ENCODE measurements at regions of chr10 and their contacts with region 1.

Region 1: DNA sequence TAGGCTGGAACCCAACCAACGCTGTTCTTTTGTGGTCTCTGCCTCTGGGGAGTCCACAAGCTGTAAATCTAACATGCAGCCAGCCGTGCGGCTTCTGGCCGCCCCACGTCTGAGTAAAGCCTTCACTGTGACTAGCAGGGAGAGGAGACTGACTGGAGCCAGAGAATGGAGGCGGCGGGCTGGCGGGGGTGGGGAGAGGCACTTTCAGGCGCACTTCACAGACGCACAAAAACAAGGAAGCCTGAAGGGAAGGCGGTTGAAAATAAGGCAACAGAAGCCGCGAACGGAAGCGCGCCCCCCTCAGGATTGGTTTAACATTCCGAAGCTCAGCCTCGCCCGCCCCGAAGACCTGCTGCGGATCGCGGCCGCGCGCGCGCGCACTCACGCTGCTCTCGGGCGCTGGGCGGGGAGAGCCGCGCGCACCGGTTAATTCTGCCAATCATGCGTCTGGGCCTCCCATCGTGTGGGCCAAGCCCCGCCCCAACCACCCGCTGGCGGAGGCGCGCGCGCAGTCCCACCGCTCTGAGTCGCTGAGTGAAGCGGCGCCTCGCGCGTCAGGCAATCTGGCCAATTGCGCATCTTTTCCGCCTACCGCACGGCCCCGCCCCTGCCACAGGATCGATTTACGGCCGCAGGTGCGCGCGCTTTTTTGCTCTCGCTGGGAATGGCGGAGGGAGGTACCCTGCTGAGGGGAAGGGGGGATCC is at the start of gene SFR1:
- DNase-seq: peak; percentile 97
- ATAC-seq: peak; percentile 89
- H3K4me3 Mint-ChIP-seq: peak within 1 kb of the TSS; percentile 92
- H3K27ac Mint-ChIP-seq: peak within 1 kb of the TSS; percentile 99
- H3K4me1 Mint-ChIP-seq: peaks cover 25% of the 10 kb centered on the region
- H3K27me3 Mint-ChIP-seq: no peaks in the 10 kb centered on the region
- CTCF ChIP-seq: no peak
- total RNA-seq, gene SFR1: 12.3 TPM in 2 replicates

Region 2: DNA sequence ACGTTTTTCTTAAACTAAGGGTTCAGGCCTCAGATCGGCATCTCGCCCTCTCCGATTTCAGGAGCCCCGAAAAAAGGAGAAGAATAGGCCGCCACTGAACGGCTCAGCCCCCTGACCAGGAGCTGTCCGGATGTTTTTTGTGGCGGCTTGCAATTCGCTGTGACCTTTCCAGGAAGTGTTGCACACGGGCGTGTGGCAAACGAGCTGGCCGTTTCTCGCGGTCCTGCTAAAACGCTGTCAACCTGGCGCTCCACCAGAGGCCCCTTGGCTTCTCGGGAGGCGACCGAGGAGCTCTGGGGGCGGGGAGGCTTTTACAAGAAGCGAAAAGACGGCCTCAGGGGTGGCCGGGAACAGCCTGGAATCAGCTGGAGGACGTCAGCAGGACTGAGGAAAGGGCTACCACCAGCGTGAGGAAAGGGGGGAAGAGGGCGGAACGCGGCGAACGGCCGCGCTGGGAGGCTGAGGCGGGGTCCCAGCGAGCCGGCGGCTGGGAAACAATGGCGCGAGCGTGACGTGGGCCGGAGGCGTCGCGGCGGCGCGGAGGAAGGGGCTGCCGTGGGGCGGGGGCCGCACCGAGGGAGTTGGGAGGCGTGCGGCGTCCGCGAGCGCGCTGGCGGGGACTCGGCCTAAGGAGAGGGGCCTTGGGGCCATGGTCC is 929.1 kb before region 1 on chr10:
- CTCF ChIA-PET with region 1: no interaction called
- POLR2A ChIA-PET with region 1: no interaction called
- intact Hi-C with region 1: loop called (anchors 5 kb)
- DNase-seq: peak; percentile 59
- ATAC-seq: peak; percentile 47
- H3K4me3 Mint-ChIP-seq: peak overlapping the region; percentile 99
- H3K27ac Mint-ChIP-seq: peak overlapping the region; percentile 96
- H3K4me1 Mint-ChIP-seq: peaks cover 47% of the 10 kb centered on the region
- H3K27me3 Mint-ChIP-seq: no peaks in the 10 kb centered on the region
- CTCF ChIP-seq: no peak

Region 3: GRCh38 chr10:103870516-103870915 is 251.2 kb before region 1 on chr10:
- CTCF ChIA-PET with region 1: no interaction called
- POLR2A ChIA-PET with region 1: no interaction called
- intact Hi-C with region 1: no loop called
- DNase-seq: no peak
- ATAC-seq: no peak
- H3K4me3 Mint-ChIP-seq: no peak overlapping the region
- H3K27ac Mint-ChIP-seq: no peak overlapping the region
- H3K4me1 Mint-ChIP-seq: peaks cover 8% of the 10 kb centered on the region
- H3K27me3 Mint-ChIP-seq: no peaks in the 10 kb centered on the region
- CTCF ChIP-seq: no peak

Region 4: DNA sequence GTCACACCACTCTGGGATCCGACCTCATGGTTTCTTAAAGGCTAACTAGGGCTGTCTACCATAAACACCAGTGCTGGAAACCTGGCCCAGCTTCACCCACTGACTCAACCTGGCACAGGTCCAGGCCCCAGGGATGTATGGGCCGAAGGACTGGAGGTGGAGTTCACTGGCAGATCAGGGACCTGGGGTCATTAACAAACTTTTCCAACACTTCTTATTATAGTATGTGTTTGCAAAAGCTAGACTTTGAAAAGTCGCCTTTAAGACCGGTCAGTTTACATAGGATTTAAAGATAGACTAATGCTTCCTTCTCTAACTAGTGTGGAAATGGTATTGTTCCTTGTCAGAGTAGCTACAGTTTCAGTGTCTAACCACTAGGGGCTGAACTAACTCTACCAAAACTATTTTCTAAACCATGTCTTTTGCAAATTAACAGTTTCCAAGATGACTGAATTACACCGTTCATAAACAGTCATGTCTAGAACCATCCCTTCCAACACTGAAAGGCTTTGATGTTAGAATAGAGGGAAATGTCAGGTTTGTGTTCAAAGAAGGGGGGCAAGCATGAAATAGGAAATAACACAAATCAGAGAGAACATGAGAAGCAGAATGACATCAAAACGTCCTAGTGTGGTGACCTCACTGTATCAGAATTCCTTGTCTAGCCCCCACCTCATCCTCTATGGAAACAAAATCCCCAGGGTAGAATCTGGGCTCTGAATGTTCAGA is 233.4 kb before region 1 on chr10:
- CTCF ChIA-PET with region 1: interaction called, 11 read pairs
- POLR2A ChIA-PET with region 1: interaction called, 6 read pairs
- intact Hi-C with region 1: loop called (anchors 2 kb)
- DNase-seq: no peak
- ATAC-seq: peak; percentile 77
- H3K4me3 Mint-ChIP-seq: no peak overlapping the region
- H3K27ac Mint-ChIP-seq: no peak overlapping the region
- H3K4me1 Mint-ChIP-seq: peaks cover 2% of the 10 kb centered on the region
- H3K27me3 Mint-ChIP-seq: no peaks in the 10 kb centered on the region
- CTCF ChIP-seq: peak; percentile 67

Region 5: GRCh38 chr10:103947799-103948516 is 173.7 kb before region 1 on chr10:
- CTCF ChIA-PET with region 1: no interaction called
- POLR2A ChIA-PET with region 1: interaction called, 10 read pairs
- intact Hi-C with region 1: no loop called
- DNase-seq: no peak
- ATAC-seq: no peak
- H3K4me3 Mint-ChIP-seq: no peak overlapping the region
- H3K27ac Mint-ChIP-seq: no peak overlapping the region
- H3K4me1 Mint-ChIP-seq: peaks cover 5% of the 10 kb centered on the region
- H3K27me3 Mint-ChIP-seq: peaks cover 16% of the 10 kb centered on the region
- CTCF ChIP-seq: no peak

Region 6: GRCh38 chr10:104109908-104110662 is 11.6 kb before region 1 on chr10:
- CTCF ChIA-PET with region 1: no interaction called
- POLR2A ChIA-PET with region 1: interaction called, 15 read pairs
- intact Hi-C with region 1: no loop called
- DNase-seq: no peak
- ATAC-seq: peak; percentile 62
- H3K4me3 Mint-ChIP-seq: no peak overlapping the region
- H3K27ac Mint-ChIP-seq: no peak overlapping the region
- H3K4me1 Mint-ChIP-seq: peaks cover 12% of the 10 kb centered on the region
- H3K27me3 Mint-ChIP-seq: peaks cover 7% of the 10 kb centered on the region
- CTCF ChIP-seq: no peak

Region 7: GRCh38 chr10:104268716-104269645 is 147.3 kb after region 1 on chr10 and contains the start of gene GSTO2:
- CTCF ChIA-PET with region 1: no interaction called
- POLR2A ChIA-PET with region 1: interaction called, 22 read pairs
- intact Hi-C with region 1: loop called (anchors 1 kb)
- DNase-seq: peak; percentile 90
- ATAC-seq: peak; percentile 96
- H3K4me3 Mint-ChIP-seq: peak within 1 kb of the TSS; percentile 91
- H3K27ac Mint-ChIP-seq: peak within 1 kb of the TSS; percentile 95
- H3K4me1 Mint-ChIP-seq: peaks cover 41% of the 10 kb centered on the region
- H3K27me3 Mint-ChIP-seq: peaks cover 1% of the 10 kb centered on the region
- CTCF ChIP-seq: no peak
- total RNA-seq, gene GSTO2: 0.56 and 0.91 TPM in 2 replicates

Region 8: GRCh38 chr10:104642658-104643302 is 521.1 kb after region 1 on chr10:
- CTCF ChIA-PET with region 1: no interaction called
- POLR2A ChIA-PET with region 1: no interaction called
- intact Hi-C with region 1: no loop called
- DNase-seq: no peak
- ATAC-seq: no peak
- H3K4me3 Mint-ChIP-seq: no peak overlapping the region
- H3K27ac Mint-ChIP-seq: no peak overlapping the region
- H3K4me1 Mint-ChIP-seq: peaks cover 2% of the 10 kb centered on the region
- H3K27me3 Mint-ChIP-seq: peaks cover 58% of the 10 kb centered on the region
- CTCF ChIP-seq: no peak